Naive thymus-derived CD4-positive, alpha-beta T cell (primary cell): ENCODE measurements at regions of chr5 and their contacts with region 1.

Region 1: GRCh38 chr5:87340716-87341115 is 72.0 kb downstream of the CCNH start:
- DNase-seq: peak in 7 of 9 donors; percentile 8 to 77 (median 55)
- ATAC-seq: peak; percentile 93
- H3K4me3 ChIP-seq: no peak overlapping the region
- H3K4me3 Mint-ChIP-seq: peak overlapping the region; percentile 2 to 81 (median 70)
- H3K27ac ChIP-seq: peak overlapping the region; percentile 54
- H3K27ac Mint-ChIP-seq: peak overlapping the region; percentile 72 to 95 (median 85)
- H3K4me1 ChIP-seq: peaks cover 6 to 8% of the 10 kb centered on the region in 2 donors
- H3K4me1 Mint-ChIP-seq: peaks cover 14 to 39% (median 30%) of the 10 kb centered on the region in 7 donors
- H3K27me3 ChIP-seq: no peaks in the 10 kb centered on the region
- H3K27me3 Mint-ChIP-seq: no peaks in the 10 kb centered on the region

Region 2: GRCh38 chr5:87267574-87268125 is 73.1 kb before region 1 on chr5 and contains the start of gene RASA1:
- CTCF ChIA-PET with region 1: no interaction called
- POLR2A ChIA-PET with region 1: interaction called, 6 read pairs
- intact Hi-C with region 1: loop called (anchors 1 to 2 kb)
- DNase-seq: peak in 3 of 9 donors; percentile 51 to 90 (median 76)
- ATAC-seq: peak; percentile 75
- H3K4me3 ChIP-seq: peak within 1 kb of the TSS; percentile 95
- H3K4me3 Mint-ChIP-seq: peak within 1 kb of the TSS; percentile 86 to 100 (median 98)
- H3K27ac ChIP-seq: peak within 1 kb of the TSS; percentile 81
- H3K27ac Mint-ChIP-seq: peak within 1 kb of the TSS; percentile 84 to 96 (median 91)
- H3K4me1 ChIP-seq: peaks cover 13 to 14% of the 10 kb centered on the region in 2 donors
- H3K4me1 Mint-ChIP-seq: peaks cover 11 to 47% (median 35%) of the 10 kb centered on the region in 7 donors
- H3K27me3 ChIP-seq: no peaks in the 10 kb centered on the region
- H3K27me3 Mint-ChIP-seq: peaks cover 0 to 7% (median 0%) of the 10 kb centered on the region in 5 donors
- total RNA-seq, gene RASA1: 20.9 to 30.7 (median 27.5) TPM

Region 3: DNA sequence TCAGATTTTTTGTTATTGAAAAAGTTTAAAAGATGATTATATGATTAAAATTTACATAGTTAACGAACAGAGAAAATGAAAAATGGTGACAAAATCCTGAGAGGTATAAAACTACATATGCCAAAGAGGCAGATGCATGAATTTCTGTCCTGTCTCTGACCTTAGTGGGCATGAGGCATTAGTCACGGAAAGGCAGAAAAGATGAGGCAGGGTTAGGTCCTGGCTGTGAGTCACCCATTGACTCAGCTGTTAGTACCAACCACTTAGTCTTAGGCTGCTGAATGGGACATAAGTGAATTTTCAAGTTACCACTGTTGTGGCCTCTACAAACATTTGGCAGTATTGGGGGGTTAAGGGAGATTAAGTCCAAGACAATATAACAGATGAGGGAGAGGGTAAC is 40.0 kb before region 1 on chr5:
- CTCF ChIA-PET with region 1: no interaction called
- POLR2A ChIA-PET with region 1: no interaction called
- intact Hi-C with region 1: loop called in 1 of 2 experiments (anchors 5 kb)
- DNase-seq: peak in 1 of 9 donors; percentile 24
- ATAC-seq: peak; percentile 78
- H3K4me3 ChIP-seq: no peak overlapping the region
- H3K4me3 Mint-ChIP-seq: no peak overlapping the region
- H3K27ac ChIP-seq: no peak overlapping the region
- H3K27ac Mint-ChIP-seq: peak overlapping the region in 2 of 9 donors; percentile 8 to 14
- H3K4me1 ChIP-seq: peaks cover 10 to 20% of the 10 kb centered on the region in 2 donors
- H3K4me1 Mint-ChIP-seq: peaks cover 38 to 79% (median 56%) of the 10 kb centered on the region in 7 donors
- H3K27me3 ChIP-seq: no peaks in the 10 kb centered on the region
- H3K27me3 Mint-ChIP-seq: no peaks in the 10 kb centered on the region

Region 4: DNA sequence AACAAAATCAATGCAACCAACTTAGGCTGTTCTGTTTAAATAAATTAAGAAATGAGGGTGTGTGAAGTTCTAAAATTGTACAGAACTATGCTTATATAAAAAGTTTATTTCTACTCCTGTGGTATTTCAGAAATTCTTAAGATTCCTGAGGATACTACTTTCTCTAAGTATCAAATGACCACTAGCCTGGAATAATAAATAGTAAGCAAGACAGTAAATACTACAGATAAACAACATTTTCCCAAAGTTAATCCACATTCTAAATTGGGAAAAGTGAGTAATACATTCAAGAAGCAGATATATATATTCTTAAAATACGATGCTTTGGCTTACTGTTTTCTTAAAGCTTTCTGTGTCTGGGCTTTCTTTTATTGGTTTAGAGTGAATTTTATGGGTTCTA is 42.5 kb after region 1 on chr5:
- CTCF ChIA-PET with region 1: no interaction called
- POLR2A ChIA-PET with region 1: no interaction called
- intact Hi-C with region 1: loop called in 1 of 2 experiments (anchors 2 kb)
- DNase-seq: no peak
- ATAC-seq: no peak
- H3K4me3 ChIP-seq: no peak overlapping the region
- H3K4me3 Mint-ChIP-seq: no peak overlapping the region
- H3K27ac ChIP-seq: no peak overlapping the region
- H3K27ac Mint-ChIP-seq: peak overlapping the region in 3 of 9 donors; percentile 19 to 70 (median 68)
- H3K4me1 ChIP-seq: no peaks in the 10 kb centered on the region
- H3K4me1 Mint-ChIP-seq: peaks cover 0 to 29% (median 21%) of the 10 kb centered on the region in 7 donors
- H3K27me3 ChIP-seq: no peaks in the 10 kb centered on the region
- H3K27me3 Mint-ChIP-seq: no peaks in the 10 kb centered on the region